Activated CD4-positive, alpha-beta memory T cell treated with anti-CD3 and anti-CD28 coated beads for 36 hours (primary cell): ENCODE measurements at regions of chr19 and their contacts with region 1.

Region 1: GRCh38 chr19:49118565-49119410 is at the start of gene C19orf73:
- DNase-seq: peak; percentile 96
- H3K4me3 Mint-ChIP-seq: peak within 1 kb of the TSS; percentile 81
- H3K27ac Mint-ChIP-seq: peak within 1 kb of the TSS; percentile 84
- H3K4me1 Mint-ChIP-seq: peaks cover 28% of the 10 kb centered on the region
- H3K27me3 Mint-ChIP-seq: peaks cover 7% of the 10 kb centered on the region
- total RNA-seq, gene C19orf73: 1.4 TPM

Region 2: GRCh38 chr19:49085020-49085867 is 33.5 kb before region 1 on chr19 and contains the start of gene SNRNP70:
- CTCF ChIA-PET with region 1: interaction called, 6 read pairs
- POLR2A ChIA-PET with region 1: interaction called, 3 read pairs
- intact Hi-C with region 1: loop called (anchors 1 kb)
- DNase-seq: peak; percentile 99
- H3K4me3 Mint-ChIP-seq: peak within 1 kb of the TSS; percentile 96
- H3K27ac Mint-ChIP-seq: peak within 1 kb of the TSS; percentile 82
- H3K4me1 Mint-ChIP-seq: peaks cover 31% of the 10 kb centered on the region
- H3K27me3 Mint-ChIP-seq: no peaks in the 10 kb centered on the region
- total RNA-seq, gene SNRNP70: 180 to 190 TPM

Region 3: GRCh38 chr19:49106648-49107135 is 12.1 kb before region 1 on chr19:
- CTCF ChIA-PET with region 1: interaction called, 48 read pairs
- POLR2A ChIA-PET with region 1: interaction called, 3 read pairs
- intact Hi-C with region 1: no loop called
- DNase-seq: peak; percentile 74
- H3K4me3 Mint-ChIP-seq: no peak overlapping the region
- H3K27ac Mint-ChIP-seq: no peak overlapping the region
- H3K4me1 Mint-ChIP-seq: no peaks in the 10 kb centered on the region
- H3K27me3 Mint-ChIP-seq: no peaks in the 10 kb centered on the region

Region 4: DNA sequence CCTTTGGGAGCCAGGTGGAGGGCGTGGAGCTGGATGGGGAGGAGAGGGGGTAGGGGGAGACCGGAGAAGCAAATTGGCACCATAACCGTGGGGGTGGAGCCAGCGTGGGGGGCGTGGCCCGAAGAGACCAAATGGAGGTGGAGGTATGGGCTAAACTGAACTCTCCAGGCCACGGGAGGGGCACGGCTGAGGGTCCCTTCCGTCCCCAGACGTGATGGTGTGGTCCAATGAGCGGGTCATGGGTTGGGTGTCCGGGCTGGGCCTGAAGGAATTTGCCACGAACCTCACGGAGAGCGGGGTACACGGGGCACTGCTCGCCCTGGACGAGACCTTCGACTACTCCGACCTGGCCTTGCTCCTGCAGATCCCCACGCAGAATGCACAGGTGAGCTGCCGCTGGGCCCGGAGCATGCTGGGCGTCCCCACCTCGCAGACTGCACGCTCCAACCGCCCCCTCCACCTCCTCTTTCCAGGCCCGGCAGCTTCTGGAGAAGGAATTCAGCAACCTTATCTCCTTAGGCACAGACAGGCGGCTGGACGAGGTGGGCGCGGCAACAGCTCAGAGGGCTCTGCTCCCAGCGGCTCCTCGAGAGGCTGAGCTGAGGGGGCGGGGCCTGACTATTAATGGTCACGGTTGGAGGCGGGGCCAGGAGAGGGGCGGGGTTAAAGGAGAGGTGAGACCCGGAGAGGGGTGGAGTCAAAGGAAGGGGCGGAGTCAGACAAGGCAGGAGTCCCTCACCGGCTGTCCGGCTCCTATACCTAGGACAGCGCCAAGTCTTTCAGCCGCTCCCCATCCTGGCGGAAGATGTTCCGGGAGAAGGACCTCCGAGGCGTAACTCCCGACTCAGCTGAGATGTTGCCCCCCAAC is 30.2 kb after region 1 on chr19:
- CTCF ChIA-PET with region 1: interaction called, 9 read pairs
- POLR2A ChIA-PET with region 1: no interaction called
- intact Hi-C with region 1: loop called (anchors 2 kb)
- DNase-seq: peak; percentile 90
- H3K4me3 Mint-ChIP-seq: peak overlapping the region; percentile 46
- H3K27ac Mint-ChIP-seq: no peak overlapping the region
- H3K4me1 Mint-ChIP-seq: peaks cover 28% of the 10 kb centered on the region
- H3K27me3 Mint-ChIP-seq: peaks cover 62% of the 10 kb centered on the region

Region 5: GRCh38 chr19:49363268-49364082 is 244.7 kb after region 1 on chr19 and contains the start of gene DKKL1:
- CTCF ChIA-PET with region 1: no interaction called
- POLR2A ChIA-PET with region 1: no interaction called
- intact Hi-C with region 1: no loop called
- DNase-seq: peak; percentile 93
- H3K4me3 Mint-ChIP-seq: no peak within 1 kb of the TSS
- H3K27ac Mint-ChIP-seq: no peak within 1 kb of the TSS
- H3K4me1 Mint-ChIP-seq: peaks cover 4% of the 10 kb centered on the region
- H3K27me3 Mint-ChIP-seq: peaks cover 14% of the 10 kb centered on the region
- total RNA-seq, gene DKKL1: not detected